ENCODE measurements at regions of chr1 and their contacts with region 1.

Region 1: DNA sequence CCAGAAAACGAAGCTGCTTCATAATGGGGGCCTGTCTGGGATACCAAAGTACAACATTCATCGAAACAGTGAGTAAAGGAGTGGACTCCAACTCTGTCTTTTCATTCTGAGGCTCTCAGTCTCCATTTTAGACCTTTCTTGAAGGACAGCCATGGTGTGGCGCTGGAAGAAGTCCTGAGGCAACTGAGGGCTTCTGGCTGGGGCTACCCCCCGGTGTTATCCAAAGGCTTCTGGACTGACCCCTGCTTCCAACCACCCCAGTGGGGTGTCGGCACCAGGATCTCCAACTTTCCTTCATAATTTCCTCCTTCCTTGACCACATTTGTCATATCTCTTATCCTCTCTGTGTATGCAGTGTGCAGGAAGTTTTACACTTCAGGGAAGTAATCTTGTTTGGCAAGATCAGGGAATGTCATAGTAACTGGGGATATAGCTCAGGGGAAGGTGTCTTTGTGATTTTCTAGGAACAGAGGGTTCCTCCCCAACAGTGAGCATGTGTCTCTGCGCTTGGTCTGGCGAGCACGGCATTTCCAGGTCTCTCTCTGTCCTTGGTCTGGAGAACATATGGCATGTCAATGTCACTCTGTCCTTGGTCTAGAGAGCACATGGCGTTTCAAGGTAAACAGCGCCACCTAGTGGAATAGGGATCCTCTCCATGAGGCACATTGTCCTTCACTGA is 19.4 kb upstream of the BSDC1 start:
- DNase-seq: peak; percentile 78
- H3K4me3 Mint-ChIP-seq: no peak overlapping the region
- H3K27ac Mint-ChIP-seq: peak overlapping the region; percentile 38
- H3K4me1 Mint-ChIP-seq: peaks cover 4% of the 10 kb centered on the region
- H3K27me3 Mint-ChIP-seq: peaks cover 5% of the 10 kb centered on the region

Region 2: GRCh38 chr1:32394141-32394889 is 19.3 kb before region 1 on chr1 and contains the start of gene BSDC1:
- CTCF ChIA-PET with region 1: interaction called, 56 read pairs
- POLR2A ChIA-PET with region 1: no interaction called
- intact Hi-C with region 1: no loop called
- DNase-seq: peak; percentile 99
- H3K4me3 Mint-ChIP-seq: peak within 1 kb of the TSS; percentile 94
- H3K27ac Mint-ChIP-seq: peak within 1 kb of the TSS; percentile 90
- H3K4me1 Mint-ChIP-seq: peaks cover 22% of the 10 kb centered on the region
- H3K27me3 Mint-ChIP-seq: no peaks in the 10 kb centered on the region
- total RNA-seq, gene BSDC1: 32.1 to 33.2 TPM

Region 3: DNA sequence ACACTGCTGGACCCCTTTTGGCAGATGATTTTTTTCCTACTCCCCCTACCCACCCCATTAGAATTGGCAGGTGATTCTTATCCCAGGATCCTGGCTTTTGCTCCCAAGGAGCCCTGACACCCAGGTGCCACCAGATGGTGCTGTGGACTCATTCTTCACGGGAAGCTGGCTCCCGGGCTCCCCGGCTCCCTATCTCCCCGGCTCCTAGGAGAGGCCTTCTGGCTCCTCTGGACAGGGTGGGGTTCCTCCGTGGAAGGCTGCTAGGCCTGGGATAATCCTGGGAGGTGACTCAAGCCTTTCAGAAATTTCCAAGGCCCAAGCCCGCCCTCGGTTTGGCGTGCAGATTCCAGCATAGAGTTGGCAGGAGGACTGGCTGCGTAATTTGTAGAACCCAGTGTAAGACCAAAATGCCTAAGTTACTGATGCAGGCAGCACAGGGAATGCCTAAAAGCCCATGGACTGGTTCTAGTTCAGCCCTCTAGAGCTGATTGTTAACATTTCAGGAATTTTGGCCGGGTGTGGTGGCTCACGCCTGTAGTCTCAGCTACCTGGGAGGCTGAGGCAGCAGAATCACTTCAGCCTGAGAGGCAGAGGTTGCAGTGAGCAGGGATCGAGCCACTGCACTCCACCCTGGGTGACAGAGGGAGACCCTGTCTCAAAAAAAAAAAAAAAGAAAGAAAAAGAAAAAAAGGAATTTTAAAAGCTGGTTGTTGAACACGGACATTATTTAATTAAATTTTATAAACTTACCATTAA is 12.6 kb before region 1 on chr1:
- CTCF ChIA-PET with region 1: interaction called, 56 read pairs
- POLR2A ChIA-PET with region 1: no interaction called
- intact Hi-C with region 1: loop called (anchors 1 kb)
- DNase-seq: peak; percentile 68
- H3K4me3 Mint-ChIP-seq: no peak overlapping the region
- H3K27ac Mint-ChIP-seq: peak overlapping the region; percentile 57
- H3K4me1 Mint-ChIP-seq: peaks cover 2% of the 10 kb centered on the region
- H3K27me3 Mint-ChIP-seq: no peaks in the 10 kb centered on the region

Region 4: DNA sequence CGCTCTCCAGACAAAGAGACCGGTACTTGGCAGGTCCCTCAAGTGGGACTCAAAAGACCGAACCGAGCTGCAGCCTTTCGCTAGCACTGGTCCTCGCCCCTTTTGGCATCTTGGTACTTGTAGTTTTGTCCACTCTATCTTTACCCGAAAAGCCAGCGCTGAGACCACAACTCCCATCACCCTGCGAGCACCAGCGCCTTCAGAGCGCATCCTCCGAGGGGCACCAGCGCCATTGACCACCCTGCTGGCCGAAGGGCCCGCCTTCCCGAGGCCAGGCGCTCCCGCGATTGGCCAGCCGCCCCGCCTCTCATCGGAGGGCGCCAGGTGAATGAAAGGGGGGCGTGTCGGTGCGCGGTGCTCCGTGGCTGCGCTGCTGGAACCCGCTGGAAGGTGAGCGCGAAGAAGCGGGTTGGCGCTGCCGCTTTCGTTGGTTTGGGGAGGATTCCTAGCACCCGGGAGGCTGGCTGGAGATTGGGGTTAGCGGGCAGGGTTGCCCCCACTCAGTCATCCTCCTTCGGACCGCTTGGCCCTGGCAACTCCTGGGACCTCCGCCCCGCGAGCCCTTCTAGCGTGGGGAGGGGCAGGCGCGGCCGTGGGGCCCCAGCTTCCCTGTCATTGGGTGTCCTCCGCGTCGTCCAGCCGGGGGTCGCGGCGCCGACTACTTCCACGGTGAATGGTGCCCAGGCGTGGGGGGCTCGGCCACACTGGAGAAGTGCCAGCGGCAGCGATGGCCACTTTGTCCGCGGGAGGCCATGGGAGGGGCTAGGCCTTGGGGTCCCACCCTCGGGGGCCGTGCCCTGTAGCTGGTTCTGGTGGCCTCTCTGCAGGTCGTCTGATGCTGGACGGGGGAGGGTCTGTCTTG is 51.3 kb after region 1 on chr1 and contains the start of gene ZBTB8B:
- CTCF ChIA-PET with region 1: no interaction called
- POLR2A ChIA-PET with region 1: no interaction called
- intact Hi-C with region 1: no loop called
- DNase-seq: peak; percentile 53
- H3K4me3 Mint-ChIP-seq: peak within 1 kb of the TSS; percentile 48
- H3K27ac Mint-ChIP-seq: no peak within 1 kb of the TSS
- H3K4me1 Mint-ChIP-seq: peaks cover 16% of the 10 kb centered on the region
- H3K27me3 Mint-ChIP-seq: peaks cover 35% of the 10 kb centered on the region
- total RNA-seq, gene ZBTB8B: not detected

Measured in activated CD4-positive, alpha-beta memory T cell treated with anti-CD3 and anti-CD28 coated beads for 36 hours (primary cell).